ENCODE measurements at regions of chr9 and their contacts with region 1.

Region 1: DNA sequence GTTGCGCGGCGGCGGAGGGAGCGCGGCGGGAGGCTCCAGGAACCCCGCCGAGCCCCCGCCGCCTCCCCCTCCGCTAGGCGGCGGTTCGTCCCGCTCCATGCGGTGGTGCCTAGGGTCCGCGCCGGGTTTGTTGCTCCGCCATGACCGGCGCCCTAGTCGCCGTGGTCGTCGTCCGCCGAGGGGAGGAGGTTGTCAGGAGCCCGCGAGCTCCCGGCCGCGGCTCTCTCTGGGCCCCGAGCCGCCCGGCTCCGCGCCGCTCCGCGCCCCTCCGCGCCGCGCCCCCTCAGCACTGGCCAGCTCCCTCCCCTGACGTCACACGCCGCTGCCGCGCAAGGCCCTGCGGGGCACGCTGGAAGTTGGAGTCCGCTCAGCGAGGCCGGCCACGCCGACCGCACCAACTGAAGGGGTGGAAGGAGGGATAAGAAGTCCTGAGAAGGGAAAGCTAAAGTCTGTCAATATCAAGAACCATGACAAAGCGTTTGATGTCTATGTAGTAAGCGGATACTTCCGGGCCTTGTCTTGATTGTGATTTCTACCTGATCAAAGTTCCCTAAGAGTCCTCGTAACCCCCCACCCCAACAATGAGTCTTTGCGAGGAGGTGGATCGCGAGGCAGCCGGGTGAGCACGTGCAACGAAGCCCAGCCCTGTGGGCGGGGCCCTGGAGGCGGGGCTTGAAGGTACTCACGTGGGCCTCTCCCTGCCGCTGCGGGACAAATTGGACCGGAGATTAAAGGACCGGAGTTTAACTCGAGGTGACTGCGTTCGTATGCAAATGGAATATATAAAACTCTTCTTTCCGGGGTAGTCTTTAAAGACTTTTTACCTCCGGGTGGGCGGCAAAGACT is at the start of gene NR6A1:
- DNase-seq: peak; percentile 97
- H3K4me3 Mint-ChIP-seq: peak within 1 kb of the TSS; percentile 99
- H3K27ac Mint-ChIP-seq: peak within 1 kb of the TSS; percentile 99
- H3K4me1 Mint-ChIP-seq: peaks cover 25% of the 10 kb centered on the region
- H3K27me3 Mint-ChIP-seq: peaks cover 6% of the 10 kb centered on the region
- CTCF ChIP-seq: no peak
- total RNA-seq, gene NR6A1: 0.91 and 2.0 TPM in 2 replicates

Region 2: GRCh38 chr9:124658165-124659017 is 112.9 kb before region 1 on chr9:
- CTCF ChIA-PET with region 1: interaction called, 3 read pairs
- POLR2A ChIA-PET with region 1: interaction called, 18 read pairs
- intact Hi-C with region 1: loop called (anchors 2 kb)
- DNase-seq: peak; percentile 98
- H3K4me3 Mint-ChIP-seq: peak overlapping the region; percentile 98
- H3K27ac Mint-ChIP-seq: peak overlapping the region; percentile 96
- H3K4me1 Mint-ChIP-seq: peaks cover 20% of the 10 kb centered on the region
- H3K27me3 Mint-ChIP-seq: no peaks in the 10 kb centered on the region
- CTCF ChIP-seq: no peak

Region 3: GRCh38 chr9:124794902-124795491 is 23.8 kb after region 1 on chr9:
- CTCF ChIA-PET with region 1: interaction called, 21 read pairs
- POLR2A ChIA-PET with region 1: no interaction called
- intact Hi-C with region 1: no loop called
- DNase-seq: peak; percentile 49
- H3K4me3 Mint-ChIP-seq: no peak overlapping the region
- H3K27ac Mint-ChIP-seq: no peak overlapping the region
- H3K4me1 Mint-ChIP-seq: peaks cover 5% of the 10 kb centered on the region
- H3K27me3 Mint-ChIP-seq: no peaks in the 10 kb centered on the region
- CTCF ChIP-seq: no peak

Region 4: DNA sequence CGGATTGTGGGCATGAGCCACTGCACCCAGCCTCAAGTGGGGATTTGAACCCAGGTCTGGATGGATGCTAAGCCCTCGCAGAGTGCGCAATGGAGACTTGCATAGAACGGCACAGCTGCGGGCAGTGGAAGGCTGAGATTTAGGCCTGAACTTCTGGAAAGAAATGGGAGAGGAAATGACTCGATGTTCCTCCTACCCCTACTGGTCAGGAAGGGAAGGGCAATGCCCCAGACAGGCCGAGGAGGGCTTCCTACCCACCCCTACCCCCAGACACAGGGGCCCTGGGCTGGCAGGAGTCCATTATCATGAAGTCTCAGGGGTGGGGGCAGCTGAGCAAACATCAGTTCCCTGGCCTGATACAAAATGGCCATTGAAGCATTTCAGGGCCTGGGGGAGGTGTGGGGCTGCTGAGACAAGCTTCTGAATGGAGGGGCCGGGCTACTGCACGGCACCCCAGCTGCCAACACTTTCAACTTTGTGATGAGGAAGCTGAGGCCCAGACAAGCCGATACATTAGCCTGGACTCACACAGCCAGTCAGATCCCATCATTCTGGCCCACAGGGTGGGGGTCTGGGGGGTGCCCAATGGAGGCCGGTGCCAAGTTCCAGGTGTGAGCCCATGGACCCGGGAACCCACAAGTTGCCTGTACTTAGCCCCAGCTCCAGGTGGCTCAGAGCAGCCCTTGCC is 68.5 kb after region 1 on chr9:
- CTCF ChIA-PET with region 1: interaction called, 927 read pairs
- POLR2A ChIA-PET with region 1: interaction called, 15 read pairs
- intact Hi-C with region 1: loop called (anchors 5 kb)
- DNase-seq: no peak
- H3K4me3 Mint-ChIP-seq: no peak overlapping the region
- H3K27ac Mint-ChIP-seq: no peak overlapping the region
- H3K4me1 Mint-ChIP-seq: peaks cover 11% of the 10 kb centered on the region
- H3K27me3 Mint-ChIP-seq: no peaks in the 10 kb centered on the region
- CTCF ChIP-seq: peak; percentile 27

Region 5: DNA sequence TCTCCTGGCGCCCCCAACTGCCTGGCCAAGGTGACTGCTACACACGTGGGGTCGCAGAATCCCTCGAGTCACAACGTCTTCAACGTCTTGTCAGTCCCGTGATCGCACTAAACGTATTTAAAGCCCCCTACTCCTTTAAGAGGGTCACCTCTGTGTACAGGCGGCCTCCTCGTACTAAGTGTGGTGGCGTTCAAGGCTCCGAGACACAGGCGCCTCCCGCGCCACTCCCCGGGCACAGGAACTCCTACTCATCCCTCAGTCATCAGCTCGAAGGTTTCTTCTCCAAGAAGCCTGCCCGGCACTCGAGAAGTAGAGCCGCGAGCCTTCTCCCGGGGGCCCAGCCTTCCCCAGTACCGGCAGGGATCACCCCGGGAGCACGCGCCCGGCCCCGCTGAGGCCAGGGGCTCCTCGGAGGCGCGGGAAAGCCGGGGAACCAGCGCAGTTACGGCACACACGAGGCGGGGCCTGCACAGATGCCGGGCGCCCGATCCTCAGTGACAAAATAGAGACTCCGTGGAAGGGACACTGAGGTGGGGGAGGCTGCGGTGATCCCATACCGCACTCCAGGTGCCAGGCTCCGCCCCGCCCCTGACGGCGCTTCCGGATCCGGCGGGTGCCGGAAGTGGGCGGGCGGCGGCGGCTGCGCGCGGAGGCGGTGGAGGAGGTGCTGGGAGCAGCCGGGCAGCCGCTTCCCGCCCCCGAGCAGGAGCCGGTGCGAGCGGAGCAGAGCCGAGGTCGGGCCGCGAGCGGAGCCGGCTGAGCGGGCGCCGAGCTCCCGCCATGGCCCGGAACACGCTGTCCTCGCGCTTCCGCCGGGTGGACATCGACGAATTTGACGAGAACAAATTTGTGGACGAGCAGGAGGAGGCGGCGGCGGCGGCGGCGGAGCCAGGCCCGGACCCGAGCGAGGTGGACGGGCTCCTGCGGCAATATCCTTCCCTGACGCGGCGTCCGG is 97.5 kb after region 1 on chr9:
- CTCF ChIA-PET with region 1: interaction called, 927 read pairs
- POLR2A ChIA-PET with region 1: interaction called, 299 read pairs
- intact Hi-C with region 1: no loop called
- DNase-seq: peak; percentile 86
- H3K4me3 Mint-ChIP-seq: peak overlapping the region; percentile 95
- H3K27ac Mint-ChIP-seq: peak overlapping the region; percentile 97
- H3K4me1 Mint-ChIP-seq: peaks cover 33% of the 10 kb centered on the region
- H3K27me3 Mint-ChIP-seq: no peaks in the 10 kb centered on the region
- CTCF ChIP-seq: no peak

Region 6: GRCh38 chr9:125143375-125144090 is 372.3 kb after region 1 on chr9 and contains the start of gene SCAI:
- CTCF ChIA-PET with region 1: interaction called, 5 read pairs
- POLR2A ChIA-PET with region 1: interaction called, 9 read pairs
- intact Hi-C with region 1: loop called (anchors 2 kb)
- DNase-seq: peak; percentile 99
- H3K4me3 Mint-ChIP-seq: peak within 1 kb of the TSS; percentile 95
- H3K27ac Mint-ChIP-seq: peak within 1 kb of the TSS; percentile 85
- H3K4me1 Mint-ChIP-seq: peaks cover 21% of the 10 kb centered on the region
- H3K27me3 Mint-ChIP-seq: no peaks in the 10 kb centered on the region
- CTCF ChIP-seq: peak; percentile 96
- total RNA-seq, gene SCAI: 3.7 and 5.4 TPM in 2 replicates